ENCODE measurements at regions of chr11 and their contacts with region 1.

Region 1: DNA sequence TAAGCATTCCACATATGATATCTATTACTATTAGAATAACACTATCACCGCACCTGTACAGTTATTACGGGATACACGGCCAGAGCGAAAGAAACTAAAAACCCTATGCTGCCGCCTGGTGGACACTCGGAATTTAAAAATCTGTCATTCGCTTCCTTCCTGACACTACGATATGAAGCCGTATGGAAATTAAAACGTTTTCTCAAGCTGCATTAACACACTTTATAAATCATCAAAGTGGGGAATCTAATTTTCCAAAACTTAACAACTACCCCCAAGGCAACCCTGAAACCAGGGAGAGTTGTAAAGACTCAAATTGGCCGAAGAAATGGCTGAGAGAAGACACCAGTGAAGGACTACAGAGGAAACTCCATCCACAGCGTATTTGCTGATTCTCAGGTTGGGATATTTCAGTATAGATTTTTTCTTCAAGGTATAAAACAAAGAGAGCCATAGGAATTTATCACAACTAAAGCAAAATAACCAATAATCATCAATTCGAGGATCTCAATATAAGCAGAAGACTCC is 1.4 kb downstream of the CCDC73 start:
- DNase-seq: peak; percentile 72
- ATAC-seq: peak; percentile 74
- H3K4me3 ChIP-seq: no peak overlapping the region
- H3K4me3 Mint-ChIP-seq: peak overlapping the region; percentile 67
- H3K27ac ChIP-seq: no peak overlapping the region
- H3K27ac Mint-ChIP-seq: no peak overlapping the region
- H3K4me1 ChIP-seq: peaks cover 0 to 6% of the 10 kb centered on the region in 2 donors
- H3K4me1 Mint-ChIP-seq: peaks cover 7% of the 10 kb centered on the region
- H3K27me3 ChIP-seq: peaks cover 0 to 3% (median 0%) of the 10 kb centered on the region in 4 experiments
- H3K27me3 Mint-ChIP-seq: peaks cover 4% of the 10 kb centered on the region
- CTCF ChIP-seq: peak; percentile 86

Region 2: GRCh38 chr11:32323814-32324130 is 469.2 kb before region 1 on chr11:
- CTCF ChIA-PET with region 1: interaction called, 21 read pairs
- POLR2A ChIA-PET with region 1: no interaction called
- intact Hi-C with region 1: no loop called
- DNase-seq: no peak
- ATAC-seq: no peak
- H3K4me3 ChIP-seq: no peak overlapping the region
- H3K4me3 Mint-ChIP-seq: no peak overlapping the region
- H3K27ac ChIP-seq: no peak overlapping the region
- H3K27ac Mint-ChIP-seq: no peak overlapping the region
- H3K4me1 ChIP-seq: no peaks in the 10 kb centered on the region
- H3K4me1 Mint-ChIP-seq: no peaks in the 10 kb centered on the region
- H3K27me3 ChIP-seq: no peaks in the 10 kb centered on the region
- H3K27me3 Mint-ChIP-seq: peaks cover 15% of the 10 kb centered on the region
- CTCF ChIP-seq: peak; percentile 55

Region 3: GRCh38 chr11:32635819-32636218 is 157.2 kb before region 1 on chr11:
- CTCF ChIA-PET with region 1: no interaction called
- POLR2A ChIA-PET with region 1: no interaction called
- intact Hi-C with region 1: no loop called
- DNase-seq: no peak
- ATAC-seq: no peak
- H3K4me3 ChIP-seq: no peak overlapping the region
- H3K4me3 Mint-ChIP-seq: no peak overlapping the region
- H3K27ac ChIP-seq: no peak overlapping the region
- H3K27ac Mint-ChIP-seq: no peak overlapping the region
- H3K4me1 ChIP-seq: no peaks in the 10 kb centered on the region
- H3K4me1 Mint-ChIP-seq: no peaks in the 10 kb centered on the region
- H3K27me3 ChIP-seq: no peaks in the 10 kb centered on the region
- H3K27me3 Mint-ChIP-seq: peaks cover 15% of the 10 kb centered on the region
- CTCF ChIP-seq: no peak

Region 4: GRCh38 chr11:32713496-32713895 is 79.5 kb before region 1 on chr11:
- CTCF ChIA-PET with region 1: no interaction called
- POLR2A ChIA-PET with region 1: no interaction called
- intact Hi-C with region 1: loop called (anchors 5 kb)
- DNase-seq: no peak
- ATAC-seq: no peak
- H3K4me3 ChIP-seq: no peak overlapping the region
- H3K4me3 Mint-ChIP-seq: no peak overlapping the region
- H3K27ac ChIP-seq: no peak overlapping the region
- H3K27ac Mint-ChIP-seq: no peak overlapping the region
- H3K4me1 ChIP-seq: no peaks in the 10 kb centered on the region
- H3K4me1 Mint-ChIP-seq: no peaks in the 10 kb centered on the region
- H3K27me3 ChIP-seq: peaks cover 0 to 4% (median 0%) of the 10 kb centered on the region in 4 experiments
- H3K27me3 Mint-ChIP-seq: peaks cover 27% of the 10 kb centered on the region
- CTCF ChIP-seq: peak; percentile 27

Region 5: DNA sequence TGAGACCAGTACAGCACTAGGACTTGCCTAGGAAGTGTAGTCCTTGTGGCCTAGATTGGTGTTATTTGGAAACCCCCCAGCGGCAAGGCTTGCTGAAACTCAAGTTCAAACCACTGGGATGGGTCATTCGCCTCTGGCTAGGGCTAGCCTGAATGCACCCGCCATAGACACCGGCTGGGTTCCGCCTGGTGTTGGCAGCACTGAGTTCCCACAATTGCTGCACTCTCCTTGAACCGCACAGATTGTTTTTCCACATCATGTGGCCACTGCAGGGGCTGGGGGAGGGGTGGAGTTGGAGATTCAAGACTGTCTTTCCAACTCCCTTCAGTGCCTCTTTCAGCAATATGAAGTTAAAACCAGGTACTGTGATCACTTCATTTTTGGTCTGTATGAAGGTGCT is 41.6 kb before region 1 on chr11:
- CTCF ChIA-PET with region 1: interaction called, 29 read pairs
- POLR2A ChIA-PET with region 1: no interaction called
- intact Hi-C with region 1: loop called (anchors 1 kb)
- DNase-seq: no peak
- ATAC-seq: no peak
- H3K4me3 ChIP-seq: no peak overlapping the region
- H3K4me3 Mint-ChIP-seq: no peak overlapping the region
- H3K27ac ChIP-seq: no peak overlapping the region
- H3K27ac Mint-ChIP-seq: no peak overlapping the region
- H3K4me1 ChIP-seq: no peaks in the 10 kb centered on the region
- H3K4me1 Mint-ChIP-seq: no peaks in the 10 kb centered on the region
- H3K27me3 ChIP-seq: no peaks in the 10 kb centered on the region
- H3K27me3 Mint-ChIP-seq: peaks cover 21% of the 10 kb centered on the region
- CTCF ChIP-seq: no peak

Region 6: DNA sequence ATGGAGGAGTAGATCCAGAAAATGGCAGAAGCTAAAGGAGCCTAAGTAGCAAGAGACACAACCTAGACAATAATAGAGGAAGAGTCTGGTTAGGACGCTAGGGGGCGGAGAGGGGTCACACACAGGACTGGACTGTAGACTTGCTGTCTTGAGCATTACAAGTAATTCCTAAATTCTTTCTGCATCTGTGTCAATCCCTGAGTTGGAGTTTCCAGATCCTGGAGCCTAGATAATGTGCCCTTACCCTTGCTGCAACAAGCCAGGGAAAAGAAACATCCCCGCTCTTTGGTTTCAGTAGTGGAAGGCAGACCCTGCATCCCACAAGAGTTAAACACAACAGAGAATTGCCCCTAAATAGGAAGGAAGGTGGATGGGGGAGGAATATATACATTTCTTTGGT is 16.3 kb after region 1 on chr11:
- CTCF ChIA-PET with region 1: interaction called, 13 read pairs
- POLR2A ChIA-PET with region 1: no interaction called
- intact Hi-C with region 1: no loop called
- DNase-seq: peak; percentile 49
- ATAC-seq: peak; percentile 61
- H3K4me3 ChIP-seq: no peak overlapping the region
- H3K4me3 Mint-ChIP-seq: no peak overlapping the region
- H3K27ac ChIP-seq: no peak overlapping the region
- H3K27ac Mint-ChIP-seq: no peak overlapping the region
- H3K4me1 ChIP-seq: no peaks in the 10 kb centered on the region
- H3K4me1 Mint-ChIP-seq: no peaks in the 10 kb centered on the region
- H3K27me3 ChIP-seq: no peaks in the 10 kb centered on the region
- H3K27me3 Mint-ChIP-seq: no peaks in the 10 kb centered on the region
- CTCF ChIP-seq: peak; percentile 67